ENCODE measurements at regions of chr1 and their contacts with region 1.

Region 1: DNA sequence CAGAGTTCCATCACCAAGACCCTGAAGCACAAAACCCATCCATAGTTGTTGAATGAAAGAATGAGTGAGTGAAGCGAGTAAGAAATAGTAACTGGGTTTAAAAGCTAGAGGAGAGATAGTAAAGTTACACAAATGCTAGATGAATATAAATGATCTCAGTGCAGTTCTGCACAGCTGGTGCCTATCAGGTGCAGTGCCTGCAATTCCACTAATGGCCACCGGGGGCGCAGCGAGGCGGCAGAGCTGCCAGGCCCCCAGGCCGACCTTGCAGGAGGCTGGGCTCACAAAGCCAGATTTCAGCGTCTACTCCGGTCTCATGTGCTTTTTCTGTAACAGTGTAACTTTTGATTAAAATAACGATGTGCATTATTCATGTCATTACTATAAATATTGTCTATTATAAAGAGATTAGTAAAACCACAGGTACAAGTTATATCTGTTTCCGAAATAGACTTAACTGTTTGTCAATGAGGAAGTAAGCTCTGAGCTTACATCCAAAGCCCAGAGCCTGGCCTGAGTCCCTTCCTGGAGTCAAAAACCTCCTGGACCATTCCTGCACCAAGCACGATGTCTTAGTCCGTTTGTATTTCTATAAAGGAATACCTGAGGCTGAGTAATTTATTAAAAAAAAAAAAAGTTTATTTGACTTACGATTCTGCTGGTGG is 477.6 kb downstream of the NPHP4 start:
- DNase-seq: peak; percentile 77
- H3K4me3 Mint-ChIP-seq: no peak overlapping the region
- H3K27ac Mint-ChIP-seq: no peak overlapping the region
- H3K4me1 Mint-ChIP-seq: peaks cover 7% of the 10 kb centered on the region
- H3K27me3 Mint-ChIP-seq: peaks cover 50% of the 10 kb centered on the region
- CTCF ChIP-seq: peak; percentile 89

Region 2: GRCh38 chr1:5620990-5621389 is 106.3 kb after region 1 on chr1:
- CTCF ChIA-PET with region 1: no interaction called
- intact Hi-C with region 1: loop called (anchors 5 kb)
- DNase-seq: no peak
- H3K4me3 Mint-ChIP-seq: no peak overlapping the region
- H3K27ac Mint-ChIP-seq: no peak overlapping the region
- H3K4me1 Mint-ChIP-seq: no peaks in the 10 kb centered on the region
- H3K27me3 Mint-ChIP-seq: peaks cover 54% of the 10 kb centered on the region
- CTCF ChIP-seq: no peak

Region 3: GRCh38 chr1:5745776-5746610 is 231.3 kb after region 1 on chr1:
- CTCF ChIA-PET with region 1: interaction called, 4 read pairs
- intact Hi-C with region 1: loop called (anchors 5 kb)
- DNase-seq: peak; percentile 74
- H3K4me3 Mint-ChIP-seq: no peak overlapping the region
- H3K27ac Mint-ChIP-seq: no peak overlapping the region
- H3K4me1 Mint-ChIP-seq: no peaks in the 10 kb centered on the region
- H3K27me3 Mint-ChIP-seq: peaks cover 57% of the 10 kb centered on the region
- CTCF ChIP-seq: peak; percentile 73

Region 4: DNA sequence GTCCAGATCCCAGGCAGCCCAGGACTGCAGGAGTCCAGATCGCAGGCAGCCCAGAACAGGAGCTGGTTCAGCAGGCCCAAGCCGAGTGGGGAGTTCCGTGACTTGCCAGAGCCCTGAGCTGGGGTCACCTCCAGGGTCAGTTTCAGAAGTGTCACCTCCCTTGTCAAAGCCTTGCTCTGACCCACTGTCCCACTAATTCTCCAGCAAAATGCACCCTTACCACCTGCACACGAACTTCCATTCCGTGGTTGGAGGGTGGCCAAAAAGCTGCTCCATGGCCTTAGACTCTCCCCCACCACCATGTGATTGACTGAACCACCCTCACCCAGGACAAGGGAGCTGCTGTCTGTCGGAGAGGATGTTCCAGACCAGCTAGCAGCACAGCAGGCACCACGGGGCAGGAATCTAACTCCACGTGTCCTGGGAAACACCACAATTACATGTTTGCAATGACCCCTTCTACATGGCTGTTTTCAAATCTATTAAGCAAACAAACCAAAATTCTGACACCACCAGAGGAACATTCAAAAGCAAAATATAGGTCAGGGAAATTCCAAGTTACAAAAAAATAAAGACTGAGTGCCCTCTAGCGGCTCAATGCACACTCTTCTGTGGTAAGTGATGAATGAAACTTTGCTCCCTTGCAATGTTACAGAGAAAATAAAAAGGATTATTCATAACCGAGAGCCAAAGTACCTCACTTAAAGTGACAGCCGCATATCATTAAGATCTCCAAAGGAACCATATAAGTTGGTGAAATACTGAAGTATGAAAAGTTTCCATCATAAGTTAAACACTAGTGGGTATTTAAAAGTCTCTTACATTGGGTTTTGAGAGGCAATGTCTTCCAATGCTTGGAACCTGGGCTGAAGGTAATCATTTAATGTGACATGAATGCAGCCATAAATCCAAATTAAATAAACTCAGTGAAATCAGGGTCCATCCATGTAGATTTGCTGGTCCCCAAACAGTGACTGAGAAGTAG is 401.2 kb after region 1 on chr1:
- CTCF ChIA-PET with region 1: no interaction called
- intact Hi-C with region 1: loop called (anchors 2 kb)
- DNase-seq: no peak
- H3K4me3 Mint-ChIP-seq: no peak overlapping the region
- H3K27ac Mint-ChIP-seq: no peak overlapping the region
- H3K4me1 Mint-ChIP-seq: no peaks in the 10 kb centered on the region
- H3K27me3 Mint-ChIP-seq: no peaks in the 10 kb centered on the region
- CTCF ChIP-seq: peak; percentile 48